GM12878 (cell line): ENCODE measurements at regions of chr4 and their contacts with region 1.

Region 1: GRCh38 chr4:74675673-74676279 is 118.5 kb downstream of the BTC start:
- DNase-seq: no peak
- ATAC-seq: peak; percentile 93
- H3K4me3 ChIP-seq: no peak overlapping the region
- H3K27ac ChIP-seq: no peak overlapping the region
- H3K4me1 ChIP-seq: no peaks in the 10 kb centered on the region
- H3K27me3 ChIP-seq: no peaks in the 10 kb centered on the region
- CTCF ChIP-seq: peak; percentile 70 to 76 (median 71)
- EP300 ChIP-seq: no peak
- POLR2A ChIP-seq: no peak
- RAD21 ChIP-seq: peak; percentile 79

Region 2: DNA sequence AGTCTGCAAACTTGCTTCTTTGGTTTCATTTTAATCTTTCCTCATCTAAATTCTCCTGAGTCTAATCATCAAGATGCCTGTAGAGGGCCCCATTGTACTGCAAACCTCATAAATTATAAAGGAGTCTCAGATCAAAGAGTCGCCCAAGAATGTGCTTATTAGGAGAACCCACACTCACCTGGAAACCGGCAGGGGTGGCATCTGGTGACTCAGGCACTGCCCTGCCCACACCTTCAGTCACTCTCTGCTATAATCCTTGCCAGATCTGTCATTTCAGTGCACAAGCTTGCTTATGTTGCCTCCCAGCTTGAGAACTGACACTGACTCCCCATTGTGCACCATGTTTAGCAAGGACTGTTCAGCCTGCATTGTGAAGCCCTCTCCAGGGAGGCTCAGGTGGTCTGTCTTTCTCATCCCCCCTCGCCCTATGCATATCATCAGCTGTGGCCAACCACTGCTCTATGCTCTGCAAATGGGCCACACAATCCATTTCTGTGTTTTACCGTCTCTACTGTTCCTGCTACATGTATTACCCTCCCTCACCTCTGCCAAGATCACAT is 355.1 kb before region 1 on chr4:
- CTCF ChIA-PET with region 1: interaction called, 47 read pairs
- POLR2A ChIA-PET with region 1: no interaction called
- RAD21 ChIA-PET with region 1: interaction called, 18 read pairs
- SMC1A ChIA-PET with region 1: interaction called, 34 read pairs
- in situ Hi-C with region 1: loop called (anchors 5 kb)
- intact Hi-C with region 1: loop called (anchors 1 kb)
- DNase-seq: peak; percentile 9
- ATAC-seq: peak; percentile 90
- H3K4me3 ChIP-seq: no peak overlapping the region
- H3K27ac ChIP-seq: no peak overlapping the region
- H3K4me1 ChIP-seq: no peaks in the 10 kb centered on the region
- H3K27me3 ChIP-seq: 0 out of 4 replicates have a peak, but pooled peaks cover 0 to 3% of the 10 kb centered on the region in 2 experiments
- CTCF ChIP-seq: peak; percentile 39 to 58 (median 50); a peak in 5 of 6 replicates
- EP300 ChIP-seq: no peak
- POLR2A ChIP-seq: no peak
- RAD21 ChIP-seq: peak; percentile 89

Region 3: DNA sequence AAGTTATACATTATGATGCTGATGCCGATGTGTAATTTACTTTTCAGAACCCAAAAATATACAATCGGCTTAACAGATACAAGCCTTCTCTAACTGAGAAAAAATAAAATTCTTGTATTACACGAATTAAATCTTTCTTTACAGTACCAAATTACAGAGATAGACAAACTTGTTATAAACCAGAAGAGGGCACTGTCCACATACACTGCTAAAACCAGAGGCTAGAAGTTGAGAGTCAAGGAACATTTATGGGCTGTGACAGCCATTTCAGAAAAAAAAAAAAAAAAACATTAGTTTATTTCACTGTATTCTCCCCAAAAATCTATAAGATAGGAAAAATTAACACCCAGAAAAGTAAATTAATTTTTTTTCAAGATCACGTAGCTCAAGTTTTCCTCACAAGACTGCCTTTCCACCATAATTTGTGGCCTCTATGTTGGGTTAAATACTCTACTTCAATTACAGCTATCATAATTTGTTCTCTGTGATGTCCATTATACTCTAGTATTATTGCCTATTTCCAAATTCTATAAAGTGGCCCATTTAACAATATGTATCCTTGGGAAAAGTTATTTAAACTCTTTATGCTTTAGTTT is 298.8 kb before region 1 on chr4:
- CTCF ChIA-PET with region 1: interaction called, 95 read pairs
- POLR2A ChIA-PET with region 1: no interaction called
- RAD21 ChIA-PET with region 1: interaction called, 7 read pairs
- SMC1A ChIA-PET with region 1: interaction called, 33 read pairs
- in situ Hi-C with region 1: loop called (anchors 5 kb)
- intact Hi-C with region 1: loop called (anchors 1 kb)
- DNase-seq: no peak
- ATAC-seq: peak; percentile 81
- H3K4me3 ChIP-seq: no peak overlapping the region
- H3K27ac ChIP-seq: no peak overlapping the region
- H3K4me1 ChIP-seq: no peaks in the 10 kb centered on the region
- H3K27me3 ChIP-seq: no peaks in the 10 kb centered on the region; a peak in 1 of 4 replicates
- CTCF ChIP-seq: peak; percentile 35 to 50 (median 36); a peak in 5 of 6 replicates
- EP300 ChIP-seq: no peak
- POLR2A ChIP-seq: no peak
- RAD21 ChIP-seq: peak; percentile 65

Region 4: GRCh38 chr4:74623041-74623440 is 52.7 kb before region 1 on chr4:
- CTCF ChIA-PET with region 1: interaction called, 26 read pairs
- POLR2A ChIA-PET with region 1: interaction called, 4 read pairs
- RAD21 ChIA-PET with region 1: interaction called, 12 read pairs
- SMC1A ChIA-PET with region 1: interaction called, 11 read pairs
- in situ Hi-C with region 1: no loop called
- intact Hi-C with region 1: loop called (anchors 1 kb)
- DNase-seq: no peak
- ATAC-seq: peak; percentile 77
- H3K4me3 ChIP-seq: no peak overlapping the region
- H3K27ac ChIP-seq: no peak overlapping the region
- H3K4me1 ChIP-seq: no peaks in the 10 kb centered on the region
- H3K27me3 ChIP-seq: no peaks in the 10 kb centered on the region
- CTCF ChIP-seq: peak; percentile 45 to 71 (median 56); a peak in 5 of 6 replicates
- EP300 ChIP-seq: no peak
- POLR2A ChIP-seq: no peak
- RAD21 ChIP-seq: peak; percentile 63

Region 5: GRCh38 chr4:75118739-75119138 is 443.0 kb after region 1 on chr4:
- CTCF ChIA-PET with region 1: interaction called, 7 read pairs
- POLR2A ChIA-PET with region 1: no interaction called
- RAD21 ChIA-PET with region 1: no interaction called
- SMC1A ChIA-PET with region 1: no interaction called
- in situ Hi-C with region 1: no loop called
- intact Hi-C with region 1: loop called (anchors 5 kb)
- DNase-seq: no peak
- ATAC-seq: no peak
- H3K4me3 ChIP-seq: no peak overlapping the region
- H3K27ac ChIP-seq: no peak overlapping the region
- H3K4me1 ChIP-seq: no peaks in the 10 kb centered on the region
- H3K27me3 ChIP-seq: no peaks in the 10 kb centered on the region
- CTCF ChIP-seq: no peak
- EP300 ChIP-seq: no peak
- POLR2A ChIP-seq: no peak
- RAD21 ChIP-seq: no peak